Activated CD4-positive, alpha-beta memory T cell treated with anti-CD3 and anti-CD28 coated beads for 36 hours (primary cell): ENCODE measurements at regions of chr5 and their contacts with region 1.

Region 1: DNA sequence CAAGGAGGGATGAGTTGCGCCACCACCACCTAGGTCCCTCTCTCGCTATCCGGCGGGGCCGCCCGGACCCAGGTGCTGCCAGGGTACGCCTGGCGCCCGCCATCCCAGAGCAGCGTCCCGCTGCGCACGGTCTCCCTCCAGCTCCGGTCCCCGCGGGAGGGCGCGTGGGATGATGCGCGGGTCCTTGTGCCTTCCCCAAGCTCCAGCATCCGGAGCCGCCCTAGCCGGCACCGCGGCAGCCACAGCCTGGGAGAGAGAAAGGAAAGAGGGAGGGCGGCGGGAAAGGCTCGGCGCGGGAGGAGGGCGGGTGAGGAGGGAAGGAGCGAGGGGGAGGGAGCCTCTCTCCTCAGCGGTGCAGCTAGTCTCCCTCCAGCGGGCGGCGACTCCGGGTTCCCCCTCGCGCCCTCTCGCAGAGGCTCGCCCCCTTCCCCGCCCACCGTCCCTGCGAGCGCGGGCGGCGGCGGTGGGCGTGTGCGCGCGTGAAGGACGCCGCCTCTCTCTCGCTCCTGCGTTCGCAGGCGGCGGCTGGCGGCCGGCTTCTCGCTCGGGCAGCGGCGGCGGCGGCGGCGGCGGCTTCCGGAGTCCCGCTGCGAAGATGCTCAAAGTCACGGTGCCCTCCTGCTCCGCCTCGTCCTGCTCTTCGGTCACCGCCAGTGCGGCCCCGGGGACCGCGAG is at the start of gene CAMK4:
- DNase-seq: peak; percentile 77
- H3K4me3 Mint-ChIP-seq: peak within 1 kb of the TSS; percentile 89
- H3K27ac Mint-ChIP-seq: peak within 1 kb of the TSS; percentile 90
- H3K4me1 Mint-ChIP-seq: peaks cover 34% of the 10 kb centered on the region
- H3K27me3 Mint-ChIP-seq: no peaks in the 10 kb centered on the region
- total RNA-seq, gene CAMK4: 33.3 to 36.5 TPM

Region 2: DNA sequence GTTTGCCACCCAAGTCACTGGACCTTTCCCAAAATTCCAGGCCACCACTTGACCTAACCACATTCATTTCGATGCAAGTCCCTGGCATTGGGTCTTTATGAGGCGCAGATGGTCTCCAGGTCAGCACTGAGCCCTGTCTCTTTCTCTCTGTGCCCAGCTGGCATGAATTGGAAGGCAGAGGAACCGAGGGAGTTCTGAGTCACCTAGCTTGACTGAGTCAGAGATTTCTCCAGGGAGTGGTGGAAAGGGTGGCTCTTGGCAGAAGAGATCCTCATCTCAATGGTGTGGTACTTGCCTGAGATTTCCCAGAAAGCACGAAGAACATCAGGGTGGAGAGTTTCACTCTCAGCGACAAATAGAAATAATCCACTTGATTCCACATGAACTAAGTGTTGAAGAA is 88.1 kb before region 1 on chr5:
- CTCF ChIA-PET with region 1: no interaction called
- POLR2A ChIA-PET with region 1: no interaction called
- intact Hi-C with region 1: no loop called
- DNase-seq: no peak
- H3K4me3 Mint-ChIP-seq: no peak overlapping the region
- H3K27ac Mint-ChIP-seq: no peak overlapping the region
- H3K4me1 Mint-ChIP-seq: peaks cover 3% of the 10 kb centered on the region
- H3K27me3 Mint-ChIP-seq: peaks cover 3% of the 10 kb centered on the region

Region 3: DNA sequence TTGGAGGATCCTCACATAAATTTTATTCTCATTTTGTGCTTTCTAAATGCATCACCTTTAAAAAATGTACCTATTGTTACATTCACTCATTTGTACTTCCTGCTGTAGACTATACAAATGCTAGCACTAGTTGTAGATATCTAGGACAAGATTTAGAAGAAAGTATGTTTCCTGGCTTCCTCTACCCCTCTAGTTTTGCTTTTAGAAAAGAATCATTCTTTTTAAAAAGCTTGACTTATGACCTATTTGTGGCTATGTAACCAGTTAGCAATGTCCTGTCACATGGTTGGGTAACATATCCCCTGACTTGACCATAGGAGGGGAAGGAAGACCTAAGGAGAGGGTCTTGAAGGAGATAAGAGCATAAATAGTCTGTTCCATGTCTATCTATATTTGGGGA is 13.4 kb after region 1 on chr5:
- CTCF ChIA-PET with region 1: interaction called, 11 read pairs
- POLR2A ChIA-PET with region 1: interaction called, 14 read pairs
- intact Hi-C with region 1: loop called (anchors 1 kb)
- DNase-seq: no peak
- H3K4me3 Mint-ChIP-seq: peak overlapping the region; percentile 61
- H3K27ac Mint-ChIP-seq: peak overlapping the region; percentile 83
- H3K4me1 Mint-ChIP-seq: peaks cover 92% of the 10 kb centered on the region
- H3K27me3 Mint-ChIP-seq: no peaks in the 10 kb centered on the region

Region 4: DNA sequence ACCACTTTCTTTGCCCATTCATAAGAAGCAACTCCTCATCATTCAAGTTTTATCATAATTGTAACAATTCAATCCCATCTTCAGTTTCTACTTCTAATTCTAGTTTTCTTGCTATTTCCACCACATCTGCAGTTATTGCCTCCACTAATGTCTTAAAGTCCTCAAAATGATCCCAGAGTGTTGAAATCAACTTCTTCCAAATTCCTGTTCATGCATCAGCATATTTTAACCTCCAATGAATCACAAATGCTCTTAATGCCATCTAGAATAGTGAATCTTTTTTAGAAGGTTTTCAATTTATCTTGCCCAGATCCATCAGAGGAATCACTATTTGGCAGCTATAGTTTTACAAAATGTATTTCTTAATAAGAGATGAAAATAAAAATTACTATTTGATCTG is 1633.8 kb after region 1 on chr5:
- CTCF ChIA-PET with region 1: no interaction called
- POLR2A ChIA-PET with region 1: no interaction called
- intact Hi-C with region 1: no loop called
- DNase-seq: no peak
- H3K4me3 Mint-ChIP-seq: no peak overlapping the region
- H3K27ac Mint-ChIP-seq: peak overlapping the region; percentile 14
- H3K4me1 Mint-ChIP-seq: peaks cover 16% of the 10 kb centered on the region
- H3K27me3 Mint-ChIP-seq: peaks cover 15% of the 10 kb centered on the region